HCT116 (cell line): ENCODE measurements at regions of chrX and their contacts with region 1.

Region 1: GRCh38 chrX:76279000-76279399 is 106.1 kb downstream of the PBDC1 start:
- DNase-seq: peak; percentile 22
- ATAC-seq: peak; percentile 69
- H3K4me3 ChIP-seq: no peak overlapping the region
- H3K27ac ChIP-seq: no peak overlapping the region
- H3K4me1 ChIP-seq: no peaks in the 10 kb centered on the region
- H3K27me3 ChIP-seq: no peaks in the 10 kb centered on the region
- CTCF ChIP-seq: peak; percentile 35 to 60 (median 56); a peak in 4 of 6 replicates
- POLR2A ChIP-seq: no peak
- RAD21 ChIP-seq: peak; percentile 66

Region 2: DNA sequence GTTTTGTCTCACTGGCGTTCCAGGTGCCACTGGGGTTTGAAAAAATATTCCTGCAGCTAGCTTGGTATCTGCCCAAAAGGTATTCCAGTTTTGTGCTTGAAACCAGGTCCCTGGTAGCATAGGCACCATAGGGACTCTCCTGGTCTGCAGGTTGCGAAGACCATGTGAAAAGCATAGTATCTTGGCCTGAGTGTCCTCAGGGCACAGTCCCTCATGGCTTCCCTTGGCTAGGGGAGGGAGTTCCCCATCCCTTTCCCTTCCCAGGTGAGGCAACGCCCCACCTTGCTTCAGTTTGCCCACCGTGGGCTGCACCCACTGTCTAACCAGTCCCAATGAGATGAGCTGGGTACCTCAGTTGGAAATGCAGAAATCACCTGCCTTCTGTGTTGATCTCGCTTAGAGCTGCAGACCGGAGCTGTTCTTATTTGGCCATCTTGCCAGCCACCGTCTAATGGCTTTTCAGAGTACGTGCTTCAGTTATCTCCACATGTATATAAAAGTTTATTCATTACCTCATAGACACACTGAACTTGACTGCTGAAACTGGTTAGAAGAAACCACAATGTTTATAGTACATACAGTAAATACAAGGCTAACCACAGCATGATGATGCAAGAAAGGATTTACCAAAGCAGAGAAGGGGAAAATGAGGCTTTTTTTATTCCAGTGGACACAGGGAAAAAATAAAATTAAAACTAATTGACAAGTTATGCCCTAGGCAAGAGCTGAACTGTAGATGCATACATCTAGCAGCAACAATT is 95.5 kb before region 1 on chrX:
- CTCF ChIA-PET with region 1: no interaction called
- POLR2A ChIA-PET with region 1: no interaction called
- RAD21 ChIA-PET with region 1: no interaction called
- intact Hi-C with region 1: no loop called
- DNase-seq: no peak
- ATAC-seq: no peak
- H3K4me3 ChIP-seq: no peak overlapping the region
- H3K27ac ChIP-seq: no peak overlapping the region
- H3K4me1 ChIP-seq: no peaks in the 10 kb centered on the region
- H3K27me3 ChIP-seq: no peaks in the 10 kb centered on the region
- CTCF ChIP-seq: no peak
- POLR2A ChIP-seq: no peak
- RAD21 ChIP-seq: no peak

Region 3: DNA sequence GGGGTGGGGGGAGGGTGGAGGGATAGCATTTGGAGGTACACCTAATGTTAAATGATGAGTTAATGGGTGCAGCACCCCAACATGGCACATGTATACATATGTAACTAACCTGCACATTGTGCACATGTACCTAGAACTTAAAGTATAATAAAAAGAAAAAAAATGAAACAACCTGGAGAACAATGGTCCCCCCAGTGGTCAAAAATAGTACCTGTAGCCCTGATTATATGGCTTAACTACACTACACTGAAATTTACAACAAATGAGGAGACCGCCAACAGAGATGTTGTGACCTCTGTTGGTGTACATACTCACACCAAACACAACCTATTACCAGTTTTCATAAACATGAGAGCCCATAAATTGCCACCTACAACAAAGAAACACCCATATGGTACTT is 141.2 kb after region 1 on chrX:
- CTCF ChIA-PET with region 1: no interaction called
- POLR2A ChIA-PET with region 1: no interaction called
- RAD21 ChIA-PET with region 1: no interaction called
- intact Hi-C with region 1: no loop called
- DNase-seq: no peak
- ATAC-seq: peak; percentile 54
- H3K4me3 ChIP-seq: no peak overlapping the region
- H3K27ac ChIP-seq: no peak overlapping the region
- H3K4me1 ChIP-seq: no peaks in the 10 kb centered on the region
- H3K27me3 ChIP-seq: no peaks in the 10 kb centered on the region
- CTCF ChIP-seq: peak in 2 of 3 experiments; percentile 21 to 23; a peak in 2 of 6 replicates
- POLR2A ChIP-seq: no peak
- RAD21 ChIP-seq: no peak

Region 4: DNA sequence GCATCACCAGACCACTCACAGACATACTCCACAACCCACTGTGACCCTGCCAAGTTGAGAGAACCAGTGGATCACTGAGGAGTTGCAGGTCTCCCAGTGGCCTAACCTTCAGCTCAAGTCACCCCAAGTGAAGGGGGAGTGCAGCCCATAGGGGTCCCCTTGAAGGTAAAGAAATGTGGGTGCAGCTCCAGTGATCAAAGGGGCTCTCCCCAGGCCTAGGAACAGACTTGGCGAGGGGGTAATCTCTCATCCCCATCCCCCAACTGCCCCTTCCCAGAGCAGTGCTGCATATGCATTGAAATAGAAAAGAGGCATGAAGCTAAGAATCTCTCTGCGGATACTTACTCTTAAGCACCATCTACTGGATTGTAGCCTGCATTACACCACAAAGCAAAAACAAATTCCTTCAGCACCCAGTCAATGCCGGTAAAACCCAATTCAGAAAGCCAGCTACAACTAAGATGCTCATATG is 175.5 kb after region 1 on chrX:
- CTCF ChIA-PET with region 1: interaction called, 26 read pairs
- POLR2A ChIA-PET with region 1: no interaction called
- RAD21 ChIA-PET with region 1: interaction called in 1 of 2 experiments, 6 read pairs
- intact Hi-C with region 1: loop called (anchors 2 kb)
- DNase-seq: peak; percentile 0
- ATAC-seq: peak; percentile 52
- H3K4me3 ChIP-seq: no peak overlapping the region
- H3K27ac ChIP-seq: no peak overlapping the region
- H3K4me1 ChIP-seq: no peaks in the 10 kb centered on the region
- H3K27me3 ChIP-seq: no peaks in the 10 kb centered on the region
- CTCF ChIP-seq: peak in 2 of 3 experiments; percentile 41 to 43; a peak in 4 of 6 replicates
- POLR2A ChIP-seq: no peak
- RAD21 ChIP-seq: peak; percentile 47

Region 5: GRCh38 chrX:76538860-76539259 is 259.9 kb after region 1 on chrX:
- CTCF ChIA-PET with region 1: interaction called, 14 read pairs
- POLR2A ChIA-PET with region 1: no interaction called
- RAD21 ChIA-PET with region 1: no interaction called
- intact Hi-C with region 1: no loop called
- DNase-seq: no peak
- ATAC-seq: no peak
- H3K4me3 ChIP-seq: no peak overlapping the region
- H3K27ac ChIP-seq: no peak overlapping the region
- H3K4me1 ChIP-seq: no peaks in the 10 kb centered on the region
- H3K27me3 ChIP-seq: no peaks in the 10 kb centered on the region
- CTCF ChIP-seq: 0 out of 6 replicates have a peak, but pooled peaks of 2 of the 3 experiments have one; percentile 9 to 18
- POLR2A ChIP-seq: no peak
- RAD21 ChIP-seq: no peak

Region 6: GRCh38 chrX:76555814-76556213 is 276.8 kb after region 1 on chrX:
- CTCF ChIA-PET with region 1: no interaction called
- POLR2A ChIA-PET with region 1: no interaction called
- RAD21 ChIA-PET with region 1: no interaction called
- intact Hi-C with region 1: loop called (anchors 10 kb)
- DNase-seq: peak; percentile 33
- ATAC-seq: peak; percentile 53; the same call in 1 of the 2 replicates
- H3K4me3 ChIP-seq: no peak overlapping the region
- H3K27ac ChIP-seq: no peak overlapping the region
- H3K4me1 ChIP-seq: no peaks in the 10 kb centered on the region
- H3K27me3 ChIP-seq: no peaks in the 10 kb centered on the region
- CTCF ChIP-seq: peak; percentile 10 to 38 (median 32); a peak in 3 of 6 replicates
- POLR2A ChIP-seq: no peak
- RAD21 ChIP-seq: peak; percentile 52

Region 7: DNA sequence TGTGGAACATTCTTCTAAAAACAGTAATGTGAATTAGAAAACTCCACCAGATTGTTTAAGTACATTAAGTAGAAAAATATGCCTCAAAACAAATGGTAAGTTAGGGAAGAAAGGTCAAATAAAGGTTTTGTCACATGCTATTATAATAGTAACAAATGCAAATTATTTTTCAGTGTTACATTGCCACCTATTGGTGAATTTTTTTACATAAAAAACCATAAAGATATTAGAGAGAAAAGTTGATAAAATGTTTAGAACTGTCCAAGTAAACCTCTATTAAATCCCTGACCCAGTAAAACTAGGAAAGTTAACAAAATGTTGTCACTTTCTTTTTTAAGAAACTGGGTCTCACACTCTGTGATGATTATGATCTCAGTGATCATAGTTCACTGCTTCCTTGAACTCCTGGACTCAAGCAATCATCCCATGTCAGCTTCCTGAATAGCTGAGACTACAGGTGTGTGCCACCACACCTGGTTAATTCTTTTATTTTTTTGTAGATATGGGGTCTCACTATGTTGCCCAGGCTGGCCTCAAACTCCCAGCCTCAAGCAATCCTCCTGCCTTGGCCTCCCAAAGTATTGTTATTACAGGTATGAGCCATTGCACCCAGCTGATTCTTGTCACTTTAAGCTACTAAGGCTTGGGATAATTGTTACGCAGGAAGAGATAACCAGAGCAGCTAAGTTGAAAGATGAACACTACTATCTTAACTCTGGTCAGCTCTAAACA is 1349.5 kb after region 1 on chrX:
- CTCF ChIA-PET with region 1: no interaction called
- POLR2A ChIA-PET with region 1: no interaction called
- RAD21 ChIA-PET with region 1: no interaction called
- intact Hi-C with region 1: loop called (anchors 10 kb)
- DNase-seq: no peak
- ATAC-seq: no peak
- H3K4me3 ChIP-seq: no peak overlapping the region
- H3K27ac ChIP-seq: no peak overlapping the region
- H3K4me1 ChIP-seq: no peaks in the 10 kb centered on the region
- H3K27me3 ChIP-seq: no peaks in the 10 kb centered on the region
- CTCF ChIP-seq: peak in 1 of 3 experiments; percentile 27; a peak in 1 of 6 replicates
- POLR2A ChIP-seq: no peak
- RAD21 ChIP-seq: 0 out of 2 replicates have a peak, but pooled peaks have one; percentile 11

Region 8: GRCh38 chrX:78029663-78030062 is 1750.7 kb after region 1 on chrX:
- CTCF ChIA-PET with region 1: interaction called, 7 read pairs
- POLR2A ChIA-PET with region 1: no interaction called
- RAD21 ChIA-PET with region 1: no interaction called
- intact Hi-C with region 1: loop called (anchors 2 kb)
- DNase-seq: no peak
- ATAC-seq: peak; percentile 72
- H3K4me3 ChIP-seq: no peak overlapping the region
- H3K27ac ChIP-seq: no peak overlapping the region
- H3K4me1 ChIP-seq: peaks cover under 1 to 3% of the 10 kb centered on the region in 2 experiments; a peak in 2 of 4 replicates
- H3K27me3 ChIP-seq: no peaks in the 10 kb centered on the region
- CTCF ChIP-seq: peak; percentile 46 to 63 (median 51); a peak in 4 of 6 replicates
- POLR2A ChIP-seq: no peak
- RAD21 ChIP-seq: peak; percentile 78